ENCODE measurements at regions of chr2 and their contacts with region 1.

Region 1: GRCh38 chr2:38508311-38509039 is 94.3 kb downstream of the HNRNPLL start:
- DNase-seq: peak; percentile 45
- ATAC-seq: peak; percentile 98
- H3K4me3 ChIP-seq: no peak overlapping the region
- H3K27ac ChIP-seq: no peak overlapping the region
- H3K4me1 ChIP-seq: no peaks in the 10 kb centered on the region
- H3K27me3 ChIP-seq: no peaks in the 10 kb centered on the region
- CTCF ChIP-seq: peak; percentile 72 to 85 (median 80); a peak in 5 of 6 replicates
- EP300 ChIP-seq: no peak
- POLR2A ChIP-seq: no peak
- RAD21 ChIP-seq: peak; percentile 98

Region 2: DNA sequence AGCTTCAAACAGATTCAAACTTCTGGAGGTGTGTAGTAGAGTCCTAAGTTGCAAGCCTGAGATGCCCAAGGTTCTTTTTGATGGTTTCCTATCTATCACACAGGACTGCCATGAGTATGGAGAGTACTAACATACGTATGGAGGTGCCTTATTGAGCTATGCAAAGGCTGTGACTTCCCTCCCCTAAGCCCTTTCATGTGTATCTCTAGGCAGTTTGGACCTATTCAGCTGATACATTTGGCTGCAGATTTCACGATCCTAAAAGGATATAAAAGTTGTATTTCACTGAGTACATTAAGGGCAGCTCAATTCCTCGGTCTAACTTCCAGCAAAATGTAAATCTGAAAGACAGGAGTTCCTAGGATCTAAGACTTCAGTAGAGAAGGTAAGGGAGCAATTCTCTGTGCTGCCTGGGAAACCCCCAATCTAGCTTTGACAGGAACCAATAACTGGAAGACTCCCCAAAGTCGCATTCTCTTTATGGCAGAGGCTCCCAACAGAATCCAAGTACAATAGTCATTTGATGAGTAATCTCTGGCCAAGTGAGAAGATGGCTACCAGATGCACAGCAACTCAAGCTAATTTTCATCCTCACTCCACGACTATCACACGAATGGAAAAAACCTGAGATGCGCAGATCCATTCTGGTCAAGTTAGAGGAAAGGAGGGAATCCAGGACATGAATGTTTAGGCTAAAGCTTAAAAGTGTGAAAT is 215.2 kb before region 1 on chr2:
- CTCF ChIA-PET with region 1: interaction called, 11 read pairs
- POLR2A ChIA-PET with region 1: no interaction called
- RAD21 ChIA-PET with region 1: interaction called, 3 read pairs
- SMC1A ChIA-PET with region 1: interaction called, 7 read pairs
- in situ Hi-C with region 1: no loop called
- intact Hi-C with region 1: no loop called
- DNase-seq: no peak
- ATAC-seq: no peak
- H3K4me3 ChIP-seq: no peak overlapping the region
- H3K27ac ChIP-seq: no peak overlapping the region
- H3K4me1 ChIP-seq: no peaks in the 10 kb centered on the region
- H3K27me3 ChIP-seq: no peaks in the 10 kb centered on the region
- CTCF ChIP-seq: no peak
- EP300 ChIP-seq: no peak
- POLR2A ChIP-seq: no peak
- RAD21 ChIP-seq: no peak

Region 3: GRCh38 chr2:38323623-38324022 is 184.9 kb before region 1 on chr2:
- CTCF ChIA-PET with region 1: interaction called, 194 read pairs
- POLR2A ChIA-PET with region 1: no interaction called
- RAD21 ChIA-PET with region 1: interaction called, 6 read pairs
- SMC1A ChIA-PET with region 1: interaction called, 12 read pairs
- in situ Hi-C with region 1: loop called (anchors 5 kb)
- intact Hi-C with region 1: no loop called
- DNase-seq: no peak
- ATAC-seq: no peak
- H3K4me3 ChIP-seq: no peak overlapping the region
- H3K27ac ChIP-seq: no peak overlapping the region
- H3K4me1 ChIP-seq: no peaks in the 10 kb centered on the region
- H3K27me3 ChIP-seq: no peaks in the 10 kb centered on the region
- CTCF ChIP-seq: no peak
- EP300 ChIP-seq: no peak
- POLR2A ChIP-seq: no peak
- RAD21 ChIP-seq: no peak

Region 4: DNA sequence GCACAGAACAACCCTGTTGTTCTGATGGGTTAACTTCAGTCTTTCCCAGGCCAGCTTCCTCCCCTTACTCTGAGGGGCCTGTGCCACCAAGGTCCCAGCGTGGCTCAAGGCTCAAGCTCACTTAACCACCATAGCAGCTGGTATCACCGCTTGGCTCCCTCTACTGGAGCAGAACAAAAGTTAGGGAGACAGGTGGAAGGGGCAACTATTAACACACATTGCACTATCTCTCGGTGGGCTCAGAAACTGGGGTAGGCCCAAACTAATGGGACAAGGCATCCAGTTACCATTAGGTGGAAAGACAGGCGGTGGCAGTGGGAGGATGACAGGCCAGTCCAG is 42.7 kb before region 1 on chr2:
- CTCF ChIA-PET with region 1: interaction called, 17 read pairs
- POLR2A ChIA-PET with region 1: no interaction called
- RAD21 ChIA-PET with region 1: interaction called, 11 read pairs
- SMC1A ChIA-PET with region 1: interaction called, 19 read pairs
- in situ Hi-C with region 1: no loop called
- intact Hi-C with region 1: no loop called
- DNase-seq: no peak
- ATAC-seq: peak; percentile 94
- H3K4me3 ChIP-seq: no peak overlapping the region
- H3K27ac ChIP-seq: no peak overlapping the region
- H3K4me1 ChIP-seq: no peaks in the 10 kb centered on the region
- H3K27me3 ChIP-seq: no peaks in the 10 kb centered on the region
- CTCF ChIP-seq: peak; percentile 68 to 76 (median 68)
- EP300 ChIP-seq: no peak
- POLR2A ChIP-seq: no peak
- RAD21 ChIP-seq: peak; percentile 82

Region 5: GRCh38 chr2:38498045-38498481 is 10.4 kb before region 1 on chr2:
- CTCF ChIA-PET with region 1: interaction called, 19 read pairs
- POLR2A ChIA-PET with region 1: interaction called, 3 read pairs
- RAD21 ChIA-PET with region 1: no interaction called
- SMC1A ChIA-PET with region 1: interaction called, 16 read pairs
- in situ Hi-C with region 1: no loop called
- intact Hi-C with region 1: no loop called
- DNase-seq: no peak
- ATAC-seq: peak; percentile 54
- H3K4me3 ChIP-seq: no peak overlapping the region
- H3K27ac ChIP-seq: no peak overlapping the region
- H3K4me1 ChIP-seq: peaks cover 7% of the 10 kb centered on the region
- H3K27me3 ChIP-seq: no peaks in the 10 kb centered on the region
- CTCF ChIP-seq: no peak
- EP300 ChIP-seq: no peak
- POLR2A ChIP-seq: no peak
- RAD21 ChIP-seq: no peak